ENCODE measurements at regions of chr2 and their contacts with region 1.

Region 1: DNA sequence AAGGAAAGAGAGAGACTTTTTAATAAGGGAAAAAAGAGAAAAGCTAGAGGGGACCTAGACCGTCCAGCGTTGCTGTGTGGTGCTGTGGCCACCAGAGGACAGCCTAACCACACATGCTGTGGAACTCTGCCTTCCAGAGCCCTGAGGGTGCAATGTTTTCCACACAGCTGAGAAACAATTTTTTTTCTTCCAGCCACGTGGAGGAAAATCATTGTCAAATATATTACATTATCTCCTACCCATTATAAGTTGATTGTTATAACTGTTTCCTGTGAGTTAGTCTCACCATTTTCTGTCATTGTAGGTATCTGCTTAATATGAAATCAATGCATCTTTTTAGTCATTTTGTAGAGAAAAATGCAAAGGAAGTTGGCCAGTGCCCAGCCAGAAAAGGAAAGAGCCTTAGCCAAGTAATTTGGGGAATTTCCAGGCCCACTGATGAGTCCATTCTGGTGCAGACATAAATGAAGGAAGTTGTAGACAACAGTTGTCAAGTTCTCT is 5.9 kb upstream of the MRPL19 start:
- DNase-seq: peak; percentile 79
- ATAC-seq: peak; percentile 99
- H3K4me3 ChIP-seq: no peak overlapping the region
- H3K27ac ChIP-seq: no peak overlapping the region
- H3K4me1 ChIP-seq: peaks cover 6% of the 10 kb centered on the region; the same call in 1 of the 2 replicates
- H3K27me3 ChIP-seq: no peaks in the 10 kb centered on the region; the same call in 1 of the 2 replicates
- CTCF ChIP-seq: peak; percentile 96

Region 2: GRCh38 chr2:75548036-75548573 is 92.6 kb before region 1 on chr2:
- CTCF ChIA-PET with region 1: no interaction called
- POLR2A ChIA-PET with region 1: no interaction called
- intact Hi-C with region 1: no loop called
- DNase-seq: no peak
- ATAC-seq: no peak
- H3K4me3 ChIP-seq: no peak overlapping the region
- H3K27ac ChIP-seq: no peak overlapping the region
- H3K4me1 ChIP-seq: peaks cover 13% of the 10 kb centered on the region
- H3K27me3 ChIP-seq: no peaks in the 10 kb centered on the region
- CTCF ChIP-seq: no peak

Region 3: GRCh38 chr2:75676464-75676863 is 35.8 kb after region 1 on chr2:
- CTCF ChIA-PET with region 1: interaction called, 4 read pairs
- POLR2A ChIA-PET with region 1: no interaction called
- intact Hi-C with region 1: loop called (anchors 1 kb)
- DNase-seq: no peak
- ATAC-seq: no peak
- H3K4me3 ChIP-seq: no peak overlapping the region
- H3K27ac ChIP-seq: no peak overlapping the region
- H3K4me1 ChIP-seq: no peaks in the 10 kb centered on the region
- H3K27me3 ChIP-seq: no peaks in the 10 kb centered on the region
- CTCF ChIP-seq: no peak

Region 4: GRCh38 chr2:75716406-75716805 is 75.7 kb after region 1 on chr2:
- CTCF ChIA-PET with region 1: no interaction called
- POLR2A ChIA-PET with region 1: no interaction called
- intact Hi-C with region 1: loop called (anchors 1 kb)
- DNase-seq: peak; percentile 8
- ATAC-seq: peak; percentile 45; the same call in 1 of the 2 replicates
- H3K4me3 ChIP-seq: no peak overlapping the region
- H3K27ac ChIP-seq: no peak overlapping the region
- H3K4me1 ChIP-seq: no peaks in the 10 kb centered on the region
- H3K27me3 ChIP-seq: peaks cover 5% of the 10 kb centered on the region; the same call in 1 of the 2 replicates
- CTCF ChIP-seq: peak; percentile 43